Right cardiac atrium (tissue), 5 donors: ENCODE measurements at regions of chr11 and their contacts with region 1.

Region 1: DNA sequence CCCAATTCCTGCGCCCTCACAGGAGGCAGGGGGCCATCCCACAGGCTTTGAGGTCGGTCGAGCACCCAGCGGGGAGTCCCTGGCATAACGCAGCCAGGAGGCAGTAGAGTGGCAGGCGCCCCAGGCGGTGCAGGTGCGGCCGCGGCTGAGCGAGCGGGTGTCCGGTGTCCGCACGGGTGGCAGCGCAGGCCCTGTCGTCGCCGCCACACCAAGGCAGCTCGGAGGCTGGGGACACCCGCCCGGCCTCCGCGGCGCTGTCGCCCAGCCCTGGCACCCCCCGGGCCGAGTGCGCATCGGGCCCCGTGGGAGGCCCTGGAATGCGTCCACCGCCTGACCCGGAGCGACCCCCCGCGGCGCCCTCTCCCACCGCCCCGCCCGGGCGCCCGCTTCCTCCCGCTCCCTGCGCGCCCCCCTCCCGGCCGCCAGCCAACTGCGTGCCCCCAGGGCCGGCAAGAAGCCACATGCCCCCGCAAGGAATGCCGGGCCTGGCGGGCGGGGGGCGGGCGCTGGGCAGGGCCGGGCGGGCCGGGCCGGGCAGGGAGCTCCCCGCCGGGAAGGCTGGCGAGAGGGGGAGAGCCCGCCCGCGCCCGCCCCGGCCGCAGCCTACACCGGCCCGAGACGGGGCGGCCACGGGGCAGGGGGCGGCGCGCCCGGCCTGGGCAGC is 33.9 kb downstream of the PRDM11 start:
- DNase-seq: peak; percentile 56 to 84 (median 82)
- ATAC-seq: peak; percentile 56 to 80
- H3K4me3 ChIP-seq: peak overlapping the region; percentile 77
- H3K27ac ChIP-seq: peak overlapping the region; percentile 83
- H3K4me1 ChIP-seq: peaks cover 11% of the 10 kb centered on the region
- H3K27me3 ChIP-seq: no peaks in the 10 kb centered on the region

Region 2: GRCh38 chr11:44911029-44911814 is 269.1 kb before region 1 on chr11:
- intact Hi-C with region 1: no loop called
- DNase-seq: peak; percentile 85 to 91 (median 87)
- ATAC-seq: peak; percentile 78 to 83
- H3K4me3 ChIP-seq: no peak overlapping the region
- H3K27ac ChIP-seq: peak overlapping the region; percentile 33
- H3K4me1 ChIP-seq: peaks cover 2% of the 10 kb centered on the region
- H3K27me3 ChIP-seq: no peaks in the 10 kb centered on the region

Region 3: GRCh38 chr11:45147017-45147728 is 33.1 kb before region 1 on chr11:
- intact Hi-C with region 1: loop called in 1 of 4 experiments (anchors 5 kb)
- DNase-seq: peak; percentile 96 to 99 (median 99)
- ATAC-seq: peak; percentile 96 to 97
- H3K4me3 ChIP-seq: peak overlapping the region; percentile 74
- H3K27ac ChIP-seq: peak overlapping the region; percentile 59
- H3K4me1 ChIP-seq: peaks cover 8% of the 10 kb centered on the region
- H3K27me3 ChIP-seq: no peaks in the 10 kb centered on the region